PC-3 (cell line): ENCODE measurements at regions of chr12 and their contacts with region 1.

Region 1: DNA sequence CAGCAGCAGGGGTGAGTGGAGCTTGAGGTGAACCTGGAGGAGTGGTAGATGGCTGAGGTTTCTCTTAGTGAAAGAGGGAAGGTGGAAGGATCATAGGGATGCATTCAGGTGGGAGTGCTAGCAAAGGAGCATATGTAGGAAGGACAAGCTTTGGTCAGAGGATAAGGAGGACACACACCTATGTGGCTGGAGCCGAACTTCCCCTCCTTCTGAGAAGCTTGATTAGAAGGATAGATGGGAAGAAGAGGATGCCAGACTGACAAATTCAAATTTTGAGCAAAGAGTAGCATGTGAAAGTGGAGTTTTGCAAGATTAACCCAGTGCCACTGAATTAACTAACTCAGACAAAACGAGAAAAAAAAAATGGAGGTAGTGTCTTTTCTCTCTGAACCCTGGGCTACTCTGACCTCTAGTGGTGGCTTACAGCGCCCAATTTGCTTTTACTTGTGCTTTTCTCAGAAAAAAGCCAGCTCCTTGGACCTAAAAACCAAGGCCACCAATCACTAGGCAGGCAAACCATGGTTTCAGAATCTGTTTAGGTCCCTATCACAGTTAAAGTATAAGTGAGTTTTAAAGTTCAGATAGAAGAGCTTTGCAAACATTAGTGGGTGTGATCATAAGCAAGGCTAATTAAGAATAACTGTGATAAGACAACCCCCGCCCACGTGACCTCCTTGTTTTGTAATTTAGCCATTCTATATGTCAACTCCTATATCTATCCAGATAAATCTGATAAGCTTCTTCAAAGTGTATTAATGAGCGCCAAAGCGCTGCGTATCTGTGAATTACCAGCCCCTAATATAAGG is 15.5 kb downstream of the EMP1 start:
- DNase-seq: peak; percentile 77
- ATAC-seq: no peak; the same call in 1 of the 2 replicates
- H3K4me3 ChIP-seq: no peak overlapping the region
- H3K27ac ChIP-seq: peak overlapping the region; percentile 19
- H3K4me1 ChIP-seq: peaks cover 49% of the 10 kb centered on the region
- H3K27me3 ChIP-seq: no peaks in the 10 kb centered on the region
- CTCF ChIP-seq: peak; percentile 71

Region 2: DNA sequence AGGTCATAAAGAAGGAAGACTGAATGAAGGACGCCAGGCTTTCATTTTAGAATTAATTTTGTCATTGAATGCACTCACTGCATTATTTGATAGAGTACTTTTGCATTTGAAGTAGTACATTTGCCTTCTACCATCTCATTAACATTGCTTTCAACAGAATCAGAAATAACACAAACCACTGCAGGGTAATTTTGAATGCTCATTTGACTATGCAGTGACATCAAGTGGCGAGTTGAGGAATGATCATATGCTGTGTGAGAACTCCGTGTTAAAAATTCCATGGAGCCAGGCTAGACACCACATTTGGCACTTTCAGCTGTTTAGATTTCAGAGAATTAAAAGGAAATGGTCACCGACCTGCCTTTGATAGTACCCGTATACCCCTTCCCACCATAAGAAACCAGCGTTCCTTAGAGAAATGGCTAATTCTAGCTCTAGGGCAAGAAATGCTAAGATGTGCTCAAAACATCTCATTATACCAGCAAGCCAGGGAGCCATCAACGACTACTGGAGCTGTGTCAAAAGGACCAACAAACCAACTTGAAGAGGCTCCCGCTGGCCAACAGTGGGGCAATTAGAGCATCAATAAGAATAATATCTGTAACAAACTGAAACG is 228.5 kb before region 1 on chr12:
- CTCF ChIA-PET with region 1: interaction called, 14 read pairs
- POLR2A ChIA-PET with region 1: no interaction called
- intact Hi-C with region 1: loop called (anchors 10 kb)
- DNase-seq: peak; percentile 63
- ATAC-seq: peak; percentile 38; the same call in 1 of the 2 replicates
- H3K4me3 ChIP-seq: no peak overlapping the region
- H3K27ac ChIP-seq: no peak overlapping the region
- H3K4me1 ChIP-seq: peaks cover 15% of the 10 kb centered on the region
- H3K27me3 ChIP-seq: no peaks in the 10 kb centered on the region
- CTCF ChIP-seq: peak; percentile 77

Region 3: DNA sequence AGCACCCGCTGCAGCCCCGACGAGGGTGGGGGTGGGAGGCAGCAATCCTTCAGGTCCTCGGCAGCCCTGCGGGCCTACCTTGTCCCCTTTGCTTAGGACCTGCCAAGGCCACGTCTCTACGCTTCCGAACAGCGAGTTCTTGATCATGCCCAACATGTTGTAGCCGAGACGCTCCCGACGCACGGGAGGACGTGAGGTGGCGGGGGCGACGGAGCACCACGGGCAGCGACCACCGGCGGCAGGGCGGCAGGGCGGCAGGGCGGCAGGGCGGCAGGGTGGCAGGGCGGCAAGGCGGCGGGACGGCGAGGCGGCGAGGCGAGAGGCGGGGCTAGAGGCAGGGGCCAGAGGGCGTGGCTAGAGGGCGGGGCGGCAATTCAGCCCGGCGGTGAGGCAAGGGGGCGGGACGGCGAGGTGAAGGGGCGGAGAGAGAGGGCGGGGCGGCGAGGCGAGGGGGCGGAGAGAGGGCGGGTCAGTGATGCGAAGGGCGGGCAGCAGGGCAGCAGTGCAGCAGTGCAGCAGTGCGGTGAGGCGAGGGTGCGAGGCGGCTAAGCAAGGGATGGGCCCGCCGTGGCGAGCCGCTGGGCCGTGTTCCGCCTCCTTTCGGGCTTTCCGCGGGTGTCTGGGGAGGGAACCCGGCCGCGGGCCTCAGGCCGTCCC is 212.0 kb before region 1 on chr12 and contains the start of gene HEBP1:
- CTCF ChIA-PET with region 1: no interaction called
- POLR2A ChIA-PET with region 1: no interaction called
- intact Hi-C with region 1: loop called (anchors 5 kb)
- DNase-seq: peak; percentile 76
- ATAC-seq: peak; percentile 69
- H3K4me3 ChIP-seq: peak within 1 kb of the TSS; percentile 100
- H3K27ac ChIP-seq: peak within 1 kb of the TSS; percentile 14
- H3K4me1 ChIP-seq: peaks cover 19% of the 10 kb centered on the region
- H3K27me3 ChIP-seq: no peaks in the 10 kb centered on the region
- CTCF ChIP-seq: no peak
- total RNA-seq, gene HEBP1: 6.2 and 8.2 TPM in 2 replicates

Region 4: DNA sequence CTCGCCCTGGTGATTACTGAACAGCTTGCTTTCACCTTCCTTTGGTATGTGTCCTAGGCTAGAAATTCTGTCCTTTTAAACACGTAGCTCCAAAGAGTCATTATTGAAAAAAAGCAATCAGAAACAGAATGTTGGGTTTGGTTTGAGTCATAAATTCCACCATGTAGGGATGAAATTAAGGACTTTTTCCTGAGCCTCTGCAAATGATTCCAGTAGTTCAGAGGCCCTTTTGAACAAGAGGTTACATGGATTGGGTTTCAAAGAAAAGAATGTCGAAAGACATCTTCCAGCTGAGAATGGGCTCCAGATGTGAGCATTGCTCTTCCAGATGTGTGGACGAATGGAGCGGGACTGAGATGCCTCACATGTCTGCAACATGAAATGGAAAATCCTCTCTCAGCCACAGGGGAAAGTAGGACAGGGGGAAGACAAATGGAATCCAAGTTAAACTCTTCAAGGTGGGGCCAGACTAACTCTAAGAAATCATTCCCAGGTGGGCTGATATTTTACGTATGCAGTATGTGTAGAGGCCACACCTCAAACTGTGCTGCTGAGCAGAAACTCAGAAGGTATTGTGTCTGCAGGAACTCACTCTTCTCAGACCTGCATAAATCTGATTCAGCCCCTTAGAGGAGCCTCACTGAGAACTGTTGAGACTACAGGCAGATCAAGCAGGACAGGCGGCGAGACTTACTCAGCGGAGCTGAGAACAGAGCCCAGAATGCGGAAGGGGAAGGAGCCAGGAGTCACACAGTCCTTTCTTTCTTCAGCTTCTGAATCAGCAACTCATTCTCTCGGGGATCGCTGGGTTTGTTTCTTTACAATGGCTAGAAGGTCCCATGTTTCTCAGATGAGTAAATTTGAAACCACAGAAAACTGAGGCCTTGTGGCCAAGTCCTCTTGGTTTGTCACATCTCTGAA is 38.8 kb before region 1 on chr12:
- CTCF ChIA-PET with region 1: no interaction called
- POLR2A ChIA-PET with region 1: no interaction called
- intact Hi-C with region 1: loop called (anchors 5 kb)
- DNase-seq: peak; percentile 75
- ATAC-seq: peak; percentile 82
- H3K4me3 ChIP-seq: no peak overlapping the region
- H3K27ac ChIP-seq: peak overlapping the region; percentile 93
- H3K4me1 ChIP-seq: peaks cover 56% of the 10 kb centered on the region
- H3K27me3 ChIP-seq: no peaks in the 10 kb centered on the region
- CTCF ChIP-seq: no peak

Region 5: GRCh38 chr12:13233830-13234641 is 22.0 kb after region 1 on chr12:
- CTCF ChIA-PET with region 1: no interaction called
- POLR2A ChIA-PET with region 1: no interaction called
- intact Hi-C with region 1: loop called (anchors 1 kb)
- DNase-seq: peak; percentile 82
- ATAC-seq: peak; percentile 78
- H3K4me3 ChIP-seq: no peak overlapping the region
- H3K27ac ChIP-seq: no peak overlapping the region
- H3K4me1 ChIP-seq: no peaks in the 10 kb centered on the region
- H3K27me3 ChIP-seq: no peaks in the 10 kb centered on the region
- CTCF ChIP-seq: peak; percentile 92